Caco-2 (cell line): ENCODE measurements at regions of chr9 and their contacts with region 1.

Region 1: GRCh38 chr9:113410207-113410864 is at the starts of genes C9orf43 and POLE3:
- DNase-seq: peak; percentile 95
- H3K4me3 ChIP-seq: peak within 1 kb of the TSS; percentile 89
- H3K4me3 Mint-ChIP-seq: peak within 1 kb of the TSS; percentile 88
- H3K27ac Mint-ChIP-seq: peak within 1 kb of the TSS; percentile 98
- H3K4me1 ChIP-seq: peaks cover 3% of the 10 kb centered on the region; the same call in 1 of the 2 replicates
- H3K4me1 Mint-ChIP-seq: peaks cover 20% of the 10 kb centered on the region
- H3K27me3 ChIP-seq: no peaks in the 10 kb centered on the region
- H3K27me3 Mint-ChIP-seq: no peaks in the 10 kb centered on the region
- CTCF ChIP-seq: no peak
- total RNA-seq, gene C9orf43: 1.1 and 1.9 TPM in 2 replicates
- total RNA-seq, gene POLE3: 48.8 and 57.2 TPM in 2 replicates

Region 2: GRCh38 chr9:113221003-113221799 is 189.1 kb before region 1 on chr9 and contains the starts of genes FKBP15 and SLC31A1:
- CTCF ChIA-PET with region 1: no interaction called
- POLR2A ChIA-PET with region 1: no interaction called
- intact Hi-C with region 1: loop called (anchors 5 kb)
- DNase-seq: peak; percentile 98 to 99
- H3K4me3 ChIP-seq: peak within 1 kb of the TSS; percentile 74
- H3K4me3 Mint-ChIP-seq: peak within 1 kb of the TSS; percentile 97
- H3K27ac Mint-ChIP-seq: peak within 1 kb of the TSS; percentile 93
- H3K4me1 ChIP-seq: peaks cover 15% of the 10 kb centered on the region
- H3K4me1 Mint-ChIP-seq: peaks cover 17% of the 10 kb centered on the region
- H3K27me3 ChIP-seq: no peaks in the 10 kb centered on the region
- H3K27me3 Mint-ChIP-seq: no peaks in the 10 kb centered on the region
- CTCF ChIP-seq: no peak
- total RNA-seq, gene FKBP15: 20.1 TPM in 2 replicates
- total RNA-seq, gene SLC31A1: 57.8 and 64.9 TPM in 2 replicates

Region 3: GRCh38 chr9:113309204-113309813 is 101.0 kb before region 1 on chr9:
- CTCF ChIA-PET with region 1: no interaction called
- POLR2A ChIA-PET with region 1: no interaction called
- intact Hi-C with region 1: loop called (anchors 1 kb)
- DNase-seq: peak in 1 of 2 experiments; percentile 43
- H3K4me3 ChIP-seq: no peak overlapping the region
- H3K4me3 Mint-ChIP-seq: no peak overlapping the region
- H3K27ac Mint-ChIP-seq: no peak overlapping the region
- H3K4me1 ChIP-seq: no peaks in the 10 kb centered on the region
- H3K4me1 Mint-ChIP-seq: no peaks in the 10 kb centered on the region
- H3K27me3 ChIP-seq: no peaks in the 10 kb centered on the region
- H3K27me3 Mint-ChIP-seq: no peaks in the 10 kb centered on the region
- CTCF ChIP-seq: peak; percentile 66 to 84

Region 4: DNA sequence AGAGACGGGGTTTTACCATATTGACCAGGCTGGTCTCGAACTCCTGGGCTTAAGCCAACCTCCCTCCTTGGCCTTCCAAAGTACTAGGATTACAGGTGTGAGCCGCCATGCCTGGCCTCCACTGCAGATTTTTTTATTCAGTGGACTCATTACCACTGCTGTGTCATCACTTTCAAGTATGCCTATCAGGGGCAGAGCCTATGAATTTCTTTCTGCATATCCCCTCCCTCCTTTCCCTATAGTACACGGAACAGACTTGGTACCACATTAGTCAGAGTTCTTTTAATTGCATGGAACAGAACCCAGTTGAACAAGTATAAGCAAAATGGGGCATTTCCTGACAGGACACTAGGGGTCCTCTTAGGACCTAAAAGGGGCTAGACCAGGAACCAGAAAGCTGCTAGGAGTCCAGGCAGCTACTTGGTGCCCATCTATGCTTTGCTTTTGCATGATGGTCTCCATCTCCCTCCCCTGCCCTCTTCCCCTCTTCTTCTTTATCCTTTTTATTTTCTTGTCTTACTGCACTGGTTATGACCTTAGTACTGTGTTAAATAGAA is 55.2 kb before region 1 on chr9:
- CTCF ChIA-PET with region 1: interaction called, 5 read pairs
- POLR2A ChIA-PET with region 1: interaction called, 7 read pairs
- intact Hi-C with region 1: loop called (anchors 1 kb)
- DNase-seq: peak in 1 of 2 experiments; percentile 52
- H3K4me3 ChIP-seq: no peak overlapping the region
- H3K4me3 Mint-ChIP-seq: no peak overlapping the region
- H3K27ac Mint-ChIP-seq: no peak overlapping the region
- H3K4me1 ChIP-seq: no peaks in the 10 kb centered on the region
- H3K4me1 Mint-ChIP-seq: peaks cover 4% of the 10 kb centered on the region
- H3K27me3 ChIP-seq: no peaks in the 10 kb centered on the region
- H3K27me3 Mint-ChIP-seq: no peaks in the 10 kb centered on the region
- CTCF ChIP-seq: peak; percentile 43 to 46

Region 5: GRCh38 chr9:113436728-113437471 is 26.6 kb after region 1 on chr9:
- CTCF ChIA-PET with region 1: no interaction called
- POLR2A ChIA-PET with region 1: no interaction called
- intact Hi-C with region 1: no loop called
- DNase-seq: peak; percentile 46 to 56
- H3K4me3 ChIP-seq: no peak overlapping the region
- H3K4me3 Mint-ChIP-seq: peak overlapping the region; percentile 56
- H3K27ac Mint-ChIP-seq: peak overlapping the region; percentile 83
- H3K4me1 ChIP-seq: peaks cover 7% of the 10 kb centered on the region; the same call in 1 of the 2 replicates
- H3K4me1 Mint-ChIP-seq: peaks cover 12% of the 10 kb centered on the region
- H3K27me3 ChIP-seq: no peaks in the 10 kb centered on the region
- H3K27me3 Mint-ChIP-seq: no peaks in the 10 kb centered on the region
- CTCF ChIP-seq: no peak

Region 6: DNA sequence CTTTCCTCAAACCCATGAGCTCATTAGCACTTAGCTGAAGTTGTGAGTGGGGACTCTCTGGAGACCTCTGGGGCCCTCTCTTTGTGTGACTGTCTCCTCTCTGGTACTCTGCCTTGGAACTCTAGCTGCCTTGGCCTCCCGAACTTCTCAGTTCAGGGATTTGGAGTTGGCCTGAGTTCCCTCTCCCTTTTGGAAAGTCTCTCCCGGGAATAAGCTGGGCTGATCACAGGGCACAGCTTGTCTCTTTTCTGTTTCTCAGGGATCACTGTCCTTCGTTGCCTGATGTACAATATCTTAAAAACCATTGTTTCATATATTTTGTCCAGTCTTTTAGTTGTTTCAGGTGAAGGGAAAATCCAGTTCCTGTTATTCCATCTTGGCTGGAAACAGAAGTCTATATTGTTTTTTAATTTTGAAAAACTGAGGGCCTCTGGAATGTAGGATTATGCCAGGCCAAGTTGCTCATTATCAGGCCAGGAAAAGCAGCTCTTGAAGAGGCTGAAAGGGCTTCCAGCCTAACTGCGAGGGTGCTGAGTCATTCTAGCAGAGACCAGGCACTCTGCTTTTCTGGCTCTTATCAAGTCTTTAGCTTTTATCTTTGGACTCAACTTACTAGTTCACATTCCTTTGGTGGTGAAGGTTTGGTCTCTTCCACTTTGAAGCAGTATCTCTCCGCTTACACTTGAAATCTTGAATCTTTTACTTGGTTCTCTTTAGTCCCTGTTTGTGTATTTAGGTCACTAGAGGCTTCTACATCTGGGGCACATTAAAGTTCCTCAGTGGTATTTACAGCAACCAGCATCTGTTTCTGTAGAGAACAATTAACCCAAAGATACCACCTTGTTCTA is 44.8 kb after region 1 on chr9:
- CTCF ChIA-PET with region 1: interaction called, 3 read pairs
- POLR2A ChIA-PET with region 1: interaction called, 6 read pairs
- intact Hi-C with region 1: loop called (anchors 2 kb)
- DNase-seq: peak; percentile 82 to 93
- H3K4me3 ChIP-seq: no peak overlapping the region
- H3K4me3 Mint-ChIP-seq: peak overlapping the region; percentile 42
- H3K27ac Mint-ChIP-seq: peak overlapping the region; percentile 66
- H3K4me1 ChIP-seq: peaks cover 44% of the 10 kb centered on the region
- H3K4me1 Mint-ChIP-seq: peaks cover 24% of the 10 kb centered on the region
- H3K27me3 ChIP-seq: no peaks in the 10 kb centered on the region
- H3K27me3 Mint-ChIP-seq: no peaks in the 10 kb centered on the region
- CTCF ChIP-seq: no peak

Region 7: GRCh38 chr9:113622600-113623400 is 212.5 kb after region 1 on chr9:
- CTCF ChIA-PET with region 1: no interaction called
- POLR2A ChIA-PET with region 1: no interaction called
- intact Hi-C with region 1: no loop called
- DNase-seq: peak; percentile 56 to 71
- H3K4me3 ChIP-seq: no peak overlapping the region
- H3K4me3 Mint-ChIP-seq: no peak overlapping the region
- H3K27ac Mint-ChIP-seq: peak overlapping the region; percentile 94
- H3K4me1 ChIP-seq: peaks cover 42% of the 10 kb centered on the region
- H3K4me1 Mint-ChIP-seq: peaks cover 38% of the 10 kb centered on the region
- H3K27me3 ChIP-seq: no peaks in the 10 kb centered on the region
- H3K27me3 Mint-ChIP-seq: no peaks in the 10 kb centered on the region
- CTCF ChIP-seq: no peak